ENCODE measurements at regions of chr5 and their contacts with region 1.

Region 1: GRCh38 chr5:134041570-134042411 is 37.0 kb upstream of the VDAC1 start:
- DNase-seq: no peak
- H3K4me3 ChIP-seq: no peak overlapping the region
- H3K27ac ChIP-seq: no peak overlapping the region
- H3K4me1 ChIP-seq: peaks cover 3 to 8% (median 4%) of the 10 kb centered on the region in 4 experiments; a peak in 6 of 7 replicates
- H3K27me3 ChIP-seq: peaks cover 0 to 3% (median under 1%) of the 10 kb centered on the region in 4 experiments; a peak in 3 of 7 replicates
- CTCF ChIP-seq: no peak
- EP300 ChIP-seq: no peak
- POLR2A ChIP-seq: no peak
- RAD21 ChIP-seq: no peak

Region 2: GRCh38 chr5:133996683-133997252 is 45.0 kb before region 1 on chr5:
- CTCF ChIA-PET with region 1: interaction called, 12 read pairs
- POLR2A ChIA-PET with region 1: no interaction called
- DNase-seq: peak in 1 of 2 experiments; percentile 67
- H3K4me3 ChIP-seq: no peak overlapping the region
- H3K27ac ChIP-seq: no peak overlapping the region
- H3K4me1 ChIP-seq: peaks cover 12 to 23% (median 15%) of the 10 kb centered on the region in 4 experiments
- H3K27me3 ChIP-seq: no peaks in the 10 kb centered on the region
- CTCF ChIP-seq: peak in 2 of 3 experiments; percentile 67 to 83; a peak in 3 of 4 replicates
- EP300 ChIP-seq: no peak
- POLR2A ChIP-seq: no peak
- RAD21 ChIP-seq: peak; percentile 26 to 48; a peak in 3 of 4 replicates

Region 3: DNA sequence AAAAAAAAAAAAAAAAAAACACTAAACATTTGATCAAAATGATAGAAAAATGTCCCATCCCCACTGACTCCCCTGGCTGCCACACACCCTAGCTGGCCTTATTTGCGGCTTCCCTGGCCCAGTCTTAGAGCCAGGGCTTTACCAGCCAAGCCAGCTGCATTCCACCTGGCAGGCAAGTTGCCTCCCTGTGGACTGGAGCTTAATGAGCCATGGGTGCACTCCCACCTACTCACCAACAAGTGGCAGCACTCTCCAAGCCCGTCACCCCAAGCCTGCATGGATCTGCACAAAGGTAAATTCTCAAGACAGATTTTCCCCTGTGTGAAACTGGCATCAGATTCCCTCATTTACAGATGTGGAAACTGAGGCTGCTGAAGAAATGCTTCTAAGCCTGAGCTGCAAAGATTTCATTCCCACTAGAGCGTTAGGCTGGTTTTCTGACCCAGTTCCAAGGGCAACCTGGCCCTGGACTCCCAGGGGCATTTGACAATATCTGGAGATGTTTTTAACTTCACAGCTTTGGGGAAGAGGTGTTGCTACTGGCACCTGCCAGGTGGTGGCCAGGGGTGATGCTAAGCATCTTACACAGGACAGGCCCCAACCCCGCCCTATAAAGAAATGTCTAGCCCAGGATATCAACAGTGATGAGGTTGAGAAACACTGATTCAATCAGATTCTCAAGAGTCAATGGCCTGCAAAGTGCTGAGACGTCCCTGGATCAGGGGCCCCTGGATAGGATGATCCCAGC is 15.1 kb before region 1 on chr5:
- CTCF ChIA-PET with region 1: interaction called, 27 read pairs
- POLR2A ChIA-PET with region 1: no interaction called
- DNase-seq: peak; percentile 66 to 67
- H3K4me3 ChIP-seq: no peak overlapping the region
- H3K27ac ChIP-seq: no peak overlapping the region
- H3K4me1 ChIP-seq: no peaks in the 10 kb centered on the region
- H3K27me3 ChIP-seq: no peaks in the 10 kb centered on the region
- CTCF ChIP-seq: peak; percentile 69 to 94 (median 90)
- EP300 ChIP-seq: no peak
- POLR2A ChIP-seq: no peak
- RAD21 ChIP-seq: peak; percentile 66 to 70

Region 4: DNA sequence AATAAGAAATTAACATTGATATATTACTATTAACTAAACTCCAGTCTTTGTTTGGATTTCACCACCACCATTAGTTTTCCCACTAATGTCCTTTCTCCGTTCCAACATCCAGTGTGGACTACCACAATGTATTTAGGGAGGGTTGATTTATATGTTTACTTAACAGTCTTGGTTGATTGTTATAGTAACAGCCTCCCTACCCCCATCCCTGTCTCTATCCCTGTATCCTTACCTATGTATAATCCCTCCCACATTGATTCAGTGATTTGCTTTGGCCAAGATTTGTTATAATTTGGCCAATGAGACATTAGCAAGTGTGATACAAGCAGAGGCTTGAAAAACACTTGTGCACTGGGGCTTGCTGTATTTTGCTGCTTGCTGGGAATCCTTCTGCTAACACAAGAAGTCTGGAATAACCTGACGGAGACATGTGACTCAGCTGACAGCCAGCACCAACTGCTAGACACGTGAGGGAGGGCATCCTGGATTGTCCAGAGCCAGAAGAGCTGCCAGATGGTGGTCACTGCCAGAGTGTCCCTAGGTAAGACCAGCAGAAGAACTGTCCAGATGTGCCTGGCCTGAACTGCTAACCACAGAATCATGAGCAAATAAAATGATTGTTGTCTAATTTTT is 21.5 kb after region 1 on chr5:
- CTCF ChIA-PET with region 1: interaction called, 17 read pairs
- POLR2A ChIA-PET with region 1: interaction called, 3 read pairs
- DNase-seq: no peak
- H3K4me3 ChIP-seq: no peak overlapping the region
- H3K27ac ChIP-seq: no peak overlapping the region
- H3K4me1 ChIP-seq: no peaks in the 10 kb centered on the region; a peak in 1 of 7 replicates
- H3K27me3 ChIP-seq: no peaks in the 10 kb centered on the region
- CTCF ChIP-seq: no peak
- EP300 ChIP-seq: no peak
- POLR2A ChIP-seq: no peak
- RAD21 ChIP-seq: no peak

Region 5: GRCh38 chr5:134077926-134078580 is 36.3 kb after region 1 on chr5:
- CTCF ChIA-PET with region 1: interaction called, 34 read pairs
- POLR2A ChIA-PET with region 1: no interaction called
- DNase-seq: no peak
- H3K4me3 ChIP-seq: no peak overlapping the region
- H3K27ac ChIP-seq: no peak overlapping the region
- H3K4me1 ChIP-seq: no peaks in the 10 kb centered on the region
- H3K27me3 ChIP-seq: no peaks in the 10 kb centered on the region
- CTCF ChIP-seq: no peak
- EP300 ChIP-seq: no peak
- POLR2A ChIP-seq: no peak
- RAD21 ChIP-seq: no peak

Region 6: DNA sequence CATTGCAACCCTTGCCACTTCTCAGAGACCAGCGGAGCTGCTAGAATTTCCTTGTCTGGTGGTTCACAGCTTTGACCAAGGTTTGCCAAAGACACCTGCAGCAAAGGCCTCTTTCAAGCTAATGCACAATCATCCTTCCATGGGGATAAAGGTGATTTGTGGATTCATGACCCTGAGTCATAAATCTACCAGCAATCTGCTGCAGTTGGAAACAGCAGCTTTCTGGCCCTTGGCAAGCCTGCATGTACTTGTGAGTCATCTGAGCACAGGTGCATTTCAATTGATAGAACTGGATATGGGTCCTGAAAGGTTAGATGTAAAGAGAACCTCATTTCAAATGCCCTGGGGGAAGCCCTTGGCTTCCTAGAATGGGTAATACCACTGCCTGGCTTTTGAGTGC is 51.1 kb after region 1 on chr5:
- CTCF ChIA-PET with region 1: interaction called, 18 read pairs
- POLR2A ChIA-PET with region 1: no interaction called
- DNase-seq: no peak
- H3K4me3 ChIP-seq: no peak overlapping the region
- H3K27ac ChIP-seq: no peak overlapping the region
- H3K4me1 ChIP-seq: peaks cover 0 to 10% (median 0%) of the 10 kb centered on the region in 4 experiments; a peak in 3 of 7 replicates
- H3K27me3 ChIP-seq: peaks cover 0 to 3% (median 2%) of the 10 kb centered on the region in 4 experiments; a peak in 3 of 7 replicates
- CTCF ChIP-seq: no peak
- EP300 ChIP-seq: no peak
- POLR2A ChIP-seq: no peak
- RAD21 ChIP-seq: no peak

Region 7: GRCh38 chr5:134161513-134162395 is 120.0 kb after region 1 on chr5:
- CTCF ChIA-PET with region 1: interaction called, 11 read pairs
- POLR2A ChIA-PET with region 1: no interaction called
- DNase-seq: no peak
- H3K4me3 ChIP-seq: no peak overlapping the region
- H3K27ac ChIP-seq: no peak overlapping the region
- H3K4me1 ChIP-seq: no peaks in the 10 kb centered on the region
- H3K27me3 ChIP-seq: no peaks in the 10 kb centered on the region
- CTCF ChIP-seq: no peak
- EP300 ChIP-seq: no peak
- POLR2A ChIP-seq: no peak
- RAD21 ChIP-seq: no peak